WTC11 (cell line): ENCODE measurements at regions of chr14 and their contacts with region 1.

Region 1: GRCh38 chr14:73231981-73232851 is 5.1 kb upstream of the PAPLN start:
- DNase-seq: peak; percentile 82
- ATAC-seq: peak; percentile 69
- H3K4me3 Mint-ChIP-seq: no peak overlapping the region
- H3K27ac Mint-ChIP-seq: no peak overlapping the region
- H3K4me1 Mint-ChIP-seq: peaks cover 61% of the 10 kb centered on the region
- H3K27me3 Mint-ChIP-seq: peaks cover 26% of the 10 kb centered on the region
- CTCF ChIP-seq: peak; percentile 38

Region 2: GRCh38 chr14:73173092-73173735 is 59.0 kb before region 1 on chr14:
- CTCF ChIA-PET with region 1: interaction called, 10 read pairs
- POLR2A ChIA-PET with region 1: no interaction called
- DNase-seq: no peak
- ATAC-seq: no peak
- H3K4me3 Mint-ChIP-seq: no peak overlapping the region
- H3K27ac Mint-ChIP-seq: no peak overlapping the region
- H3K4me1 Mint-ChIP-seq: peaks cover 21% of the 10 kb centered on the region
- H3K27me3 Mint-ChIP-seq: peaks cover 3% of the 10 kb centered on the region; the same call in 1 of the 2 replicates
- CTCF ChIP-seq: no peak

Region 3: DNA sequence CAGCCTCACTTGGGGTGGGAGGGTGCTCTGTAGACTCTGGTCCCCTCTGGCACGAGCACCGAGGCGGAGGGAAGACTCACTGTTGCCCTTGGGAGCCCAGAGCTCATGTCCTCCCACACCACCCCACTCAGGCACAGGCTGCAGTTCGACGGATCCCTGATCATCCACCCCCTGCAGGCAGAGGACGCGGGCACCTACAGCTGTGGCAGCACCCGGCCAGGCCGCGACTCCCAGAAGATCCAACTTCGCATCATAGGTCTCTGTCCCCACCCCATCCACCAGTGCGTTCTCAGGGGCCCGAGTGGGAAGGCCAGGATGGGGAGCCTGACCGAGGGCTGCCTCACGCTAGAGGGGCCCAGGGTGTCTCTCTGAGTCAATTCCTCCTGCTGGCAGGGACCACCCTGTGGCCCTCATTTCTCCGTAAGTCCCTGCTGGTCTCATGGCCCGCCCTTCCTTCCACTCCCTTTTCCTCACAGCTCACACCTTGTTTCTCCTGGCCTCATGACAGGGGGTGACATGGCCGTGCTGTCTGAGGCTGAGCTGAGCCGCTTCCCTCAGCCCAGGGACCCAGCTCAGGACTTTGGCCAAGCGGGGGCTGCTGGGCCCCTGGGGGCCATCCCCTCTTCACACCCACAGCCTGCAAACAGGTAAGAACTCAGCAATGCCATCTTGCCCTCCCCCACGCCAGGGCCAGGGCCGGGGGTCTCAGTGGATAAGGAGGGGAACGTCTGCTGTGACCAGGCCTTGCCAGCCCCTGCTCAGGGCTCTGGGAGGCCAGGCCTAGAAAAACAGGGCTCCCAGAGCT is 32.1 kb after region 1 on chr14:
- CTCF ChIA-PET with region 1: interaction called, 16 read pairs
- POLR2A ChIA-PET with region 1: no interaction called
- DNase-seq: no peak
- ATAC-seq: no peak
- H3K4me3 Mint-ChIP-seq: no peak overlapping the region
- H3K27ac Mint-ChIP-seq: no peak overlapping the region
- H3K4me1 Mint-ChIP-seq: no peaks in the 10 kb centered on the region; the same call in 1 of the 2 replicates
- H3K27me3 Mint-ChIP-seq: no peaks in the 10 kb centered on the region
- CTCF ChIP-seq: no peak

Region 4: DNA sequence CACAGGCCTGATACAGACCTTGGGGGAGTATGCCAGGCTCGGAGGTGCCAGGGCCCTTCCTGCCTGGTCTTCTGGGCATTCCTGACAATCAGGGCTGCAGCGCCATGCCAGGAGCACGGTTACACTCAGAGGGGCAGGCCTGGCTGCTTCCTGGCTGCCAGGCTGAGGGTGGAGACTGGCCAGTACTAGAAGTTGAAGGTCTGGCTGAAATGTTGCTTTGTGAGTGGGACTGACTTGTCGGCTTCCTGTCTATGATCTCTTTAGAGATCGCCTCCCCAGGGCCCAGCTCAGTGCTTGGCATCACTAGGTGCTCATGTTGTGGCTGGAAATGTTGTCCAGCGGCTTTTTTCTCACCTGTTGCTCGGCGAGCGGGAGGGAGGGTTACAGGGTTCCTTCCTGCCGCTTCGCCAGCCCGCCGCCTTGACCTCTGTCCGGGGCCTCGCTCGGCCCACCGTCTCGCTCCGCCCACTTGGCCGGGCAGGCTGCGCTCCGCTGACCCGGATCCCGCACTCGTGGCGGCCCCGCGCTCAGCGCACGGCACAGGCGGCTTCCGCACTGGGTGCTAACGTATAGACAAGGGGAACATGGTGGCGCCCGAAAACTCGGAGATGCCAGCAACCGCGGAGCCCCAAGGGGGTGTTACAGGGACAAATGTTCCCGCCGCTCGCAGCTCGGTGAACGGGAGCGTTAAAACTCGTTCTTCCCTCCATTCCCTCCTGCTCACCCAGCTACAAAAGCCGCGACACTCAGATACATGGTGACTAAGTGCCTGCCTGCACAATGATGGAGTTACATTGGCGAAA is 37.7 kb after region 1 on chr14:
- CTCF ChIA-PET with region 1: interaction called, 16 read pairs
- POLR2A ChIA-PET with region 1: interaction called, 3 read pairs
- DNase-seq: peak; percentile 46
- ATAC-seq: peak; percentile 72
- H3K4me3 Mint-ChIP-seq: peak overlapping the region; percentile 52
- H3K27ac Mint-ChIP-seq: no peak overlapping the region; the same call in 1 of the 2 replicates
- H3K4me1 Mint-ChIP-seq: peaks cover 2% of the 10 kb centered on the region
- H3K27me3 Mint-ChIP-seq: no peaks in the 10 kb centered on the region
- CTCF ChIP-seq: no peak

Region 5: GRCh38 chr14:73283608-73284379 is 51.6 kb after region 1 on chr14:
- CTCF ChIA-PET with region 1: interaction called, 29 read pairs
- POLR2A ChIA-PET with region 1: no interaction called
- DNase-seq: peak; percentile 45
- ATAC-seq: peak; percentile 75
- H3K4me3 Mint-ChIP-seq: peak overlapping the region; percentile 12; the same call in 1 of the 2 replicates
- H3K27ac Mint-ChIP-seq: peak overlapping the region; percentile 76
- H3K4me1 Mint-ChIP-seq: peaks cover 44% of the 10 kb centered on the region
- H3K27me3 Mint-ChIP-seq: peaks cover 18% of the 10 kb centered on the region
- CTCF ChIP-seq: no peak

Region 6: DNA sequence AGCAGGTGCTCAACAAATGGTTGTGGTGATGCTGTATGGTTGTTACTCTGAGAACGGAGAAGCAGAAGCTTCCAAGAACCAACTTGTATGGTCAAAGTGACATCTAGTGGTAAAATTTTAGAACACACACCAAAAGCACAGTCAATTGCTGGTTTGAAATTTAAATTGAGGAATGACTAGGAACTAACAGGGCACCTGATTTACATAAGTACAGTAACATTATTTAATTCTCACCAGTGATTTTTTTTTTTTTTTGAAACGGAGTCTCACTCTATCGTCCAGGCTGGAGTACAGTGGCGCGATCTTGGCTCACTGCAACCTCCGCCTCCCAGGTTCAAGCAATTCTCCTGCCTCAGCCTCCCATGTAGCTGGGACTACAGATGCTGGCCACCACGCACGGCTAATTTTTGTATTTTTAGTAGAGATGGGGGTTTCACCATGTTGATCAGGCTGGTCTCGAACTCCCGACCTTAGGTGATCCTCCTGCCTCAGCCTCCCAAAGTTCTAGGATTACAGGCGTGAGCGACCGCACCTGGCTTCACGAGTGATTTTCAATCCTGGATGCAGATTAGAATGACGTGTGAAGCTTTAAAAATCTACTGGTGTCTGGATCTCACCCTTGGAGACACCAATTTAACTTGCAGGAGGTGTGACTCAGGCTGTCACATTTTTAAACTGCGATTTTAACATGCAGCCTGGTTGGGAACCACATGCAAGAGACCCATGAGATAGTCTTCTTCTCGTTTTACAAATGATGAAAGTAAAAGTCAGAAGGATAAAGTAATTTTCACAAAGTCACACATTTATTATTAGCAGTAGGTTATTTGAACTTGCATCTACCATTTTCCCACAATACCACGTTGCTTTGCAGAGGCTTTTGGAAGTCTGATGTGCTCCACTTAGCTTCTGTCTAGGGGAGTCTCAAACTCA is 240.2 kb after region 1 on chr14:
- CTCF ChIA-PET with region 1: interaction called, 11 read pairs
- POLR2A ChIA-PET with region 1: no interaction called
- DNase-seq: no peak
- ATAC-seq: peak; percentile 82
- H3K4me3 Mint-ChIP-seq: no peak overlapping the region
- H3K27ac Mint-ChIP-seq: no peak overlapping the region
- H3K4me1 Mint-ChIP-seq: peaks cover under 1% of the 10 kb centered on the region; the same call in 1 of the 2 replicates
- H3K27me3 Mint-ChIP-seq: no peaks in the 10 kb centered on the region
- CTCF ChIP-seq: peak; percentile 43; the same call in 1 of the 2 replicates